Breast epithelium (tissue), 4 donors: ENCODE measurements at regions of chr3 and their contacts with region 1.

Region 1: GRCh38 chr3:10952526-10952925 is 40.0 kb upstream of the SLC6A1 start:
- DNase-seq: no peak
- H3K4me3 ChIP-seq: no peak overlapping the region
- H3K27ac ChIP-seq: no peak overlapping the region
- H3K4me1 ChIP-seq: no peaks in the 10 kb centered on the region
- H3K27me3 ChIP-seq: peaks cover 0 to 11% of the 10 kb centered on the region in 2 donors
- CTCF ChIP-seq: no peak
- POLR2A ChIP-seq: no peak

Region 2: GRCh38 chr3:10772271-10773161 is 180.0 kb before region 1 on chr3:
- intact Hi-C with region 1: loop called (anchors 2 kb)
- DNase-seq: no peak
- H3K4me3 ChIP-seq: no peak overlapping the region
- H3K27ac ChIP-seq: no peak overlapping the region
- H3K4me1 ChIP-seq: no peaks in the 10 kb centered on the region
- H3K27me3 ChIP-seq: peaks cover 0 to 31% of the 10 kb centered on the region in 2 donors
- CTCF ChIP-seq: no peak
- POLR2A ChIP-seq: no peak

Region 3: GRCh38 chr3:11045536-11045935 is 93.0 kb after region 1 on chr3:
- intact Hi-C with region 1: no loop called
- DNase-seq: no peak
- H3K4me3 ChIP-seq: no peak overlapping the region
- H3K27ac ChIP-seq: no peak overlapping the region
- H3K4me1 ChIP-seq: no peaks in the 10 kb centered on the region
- H3K27me3 ChIP-seq: no peaks in the 10 kb centered on the region
- CTCF ChIP-seq: no peak
- POLR2A ChIP-seq: no peak